Activated CD4-positive, alpha-beta T cell treated with anti-CD3 and anti-CD28 coated beads, Interleukin-2, amount 10 ng/mL, durations not matched to agents 7 days and 5 days (primary cell): ENCODE measurements at regions of chr5 and their contacts with region 1.

Region 1: DNA sequence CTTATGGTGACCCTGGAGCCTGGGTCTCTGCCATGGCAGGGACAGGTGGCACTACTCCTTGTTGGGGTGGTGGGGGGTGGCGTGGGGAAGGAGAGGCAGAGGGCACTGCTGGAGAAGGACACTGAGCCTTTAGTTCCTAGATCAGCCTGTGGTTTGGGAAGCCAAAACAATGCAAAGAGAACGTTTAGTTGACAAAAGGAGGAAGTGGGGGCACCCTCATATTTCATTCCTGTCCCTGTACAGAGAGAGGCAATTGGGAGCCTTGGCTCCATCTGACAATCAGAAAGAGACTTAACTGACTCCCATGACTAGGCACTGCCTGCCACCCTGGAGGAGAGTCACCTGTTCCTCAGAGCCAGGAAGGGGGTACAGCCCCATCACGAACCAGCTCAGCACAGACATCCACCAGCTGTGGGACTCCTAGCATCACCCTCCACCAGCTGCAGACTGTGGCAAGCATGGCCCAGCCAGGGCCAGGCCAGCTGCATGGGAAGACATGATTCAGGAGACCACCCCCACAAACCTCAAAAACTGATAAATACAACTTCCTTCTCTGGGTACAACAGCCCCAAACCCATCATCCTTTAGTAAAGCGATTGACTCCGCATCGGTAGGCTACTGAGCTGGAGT is 257.5 kb downstream of the HSPA4 start:
- DNase-seq: no peak
- H3K4me3 Mint-ChIP-seq: no peak overlapping the region
- H3K27ac Mint-ChIP-seq: no peak overlapping the region
- H3K4me1 Mint-ChIP-seq: no peaks in the 10 kb centered on the region
- H3K27me3 Mint-ChIP-seq: peaks cover 3% of the 10 kb centered on the region

Region 2: GRCh38 chr5:133323494-133324457 is 14.5 kb after region 1 on chr5:
- CTCF ChIA-PET with region 1: interaction called, 11 read pairs
- POLR2A ChIA-PET with region 1: no interaction called
- DNase-seq: no peak
- H3K4me3 Mint-ChIP-seq: no peak overlapping the region
- H3K27ac Mint-ChIP-seq: no peak overlapping the region
- H3K4me1 Mint-ChIP-seq: no peaks in the 10 kb centered on the region
- H3K27me3 Mint-ChIP-seq: no peaks in the 10 kb centered on the region

Region 3: GRCh38 chr5:133440467-133441115 is 131.3 kb after region 1 on chr5:
- CTCF ChIA-PET with region 1: no interaction called
- POLR2A ChIA-PET with region 1: no interaction called
- DNase-seq: no peak
- H3K4me3 Mint-ChIP-seq: no peak overlapping the region
- H3K27ac Mint-ChIP-seq: no peak overlapping the region
- H3K4me1 Mint-ChIP-seq: no peaks in the 10 kb centered on the region
- H3K27me3 Mint-ChIP-seq: peaks cover 8% of the 10 kb centered on the region